ENCODE measurements at regions of chr1 and their contacts with region 1.

Region 1: DNA sequence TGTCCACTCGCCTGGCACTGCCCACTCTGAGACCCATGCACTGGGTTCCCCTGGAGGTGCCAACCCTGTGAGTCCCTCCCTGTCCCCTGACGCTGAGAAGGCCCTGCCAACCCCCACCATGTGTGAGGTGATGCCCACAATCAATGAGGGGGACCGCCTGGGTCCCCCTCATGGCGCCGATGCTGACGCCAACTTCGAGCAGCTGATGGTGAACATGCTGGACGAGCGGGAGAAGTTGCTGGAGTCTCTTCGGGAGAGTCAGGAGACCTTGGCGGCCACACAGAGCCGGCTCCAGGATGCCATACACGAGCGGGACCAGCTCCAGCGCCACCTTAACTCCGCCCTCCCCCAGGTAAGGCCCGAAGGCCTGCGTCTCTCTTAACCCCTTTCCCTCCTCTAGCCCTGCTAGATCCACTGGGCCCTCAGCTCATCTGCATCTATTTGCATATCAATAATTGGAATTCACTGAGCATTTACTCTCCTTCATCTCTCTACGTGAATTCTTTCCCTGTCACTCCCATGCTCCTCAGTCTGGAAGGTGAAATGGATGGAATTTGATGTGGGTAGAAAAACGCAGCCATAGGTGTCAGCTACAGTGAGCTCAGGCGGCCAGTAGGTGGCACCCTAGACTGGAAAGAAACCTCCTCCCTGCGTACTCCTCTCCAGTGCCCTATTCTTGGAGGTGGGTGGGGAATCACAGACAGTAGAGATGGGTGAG is 12.8 kb downstream of the PPFIA4 start:
- DNase-seq: peak; percentile 85
- H3K4me3 ChIP-seq: no peak overlapping the region
- H3K27ac ChIP-seq: peak overlapping the region; percentile 63 to 88 (median 76)
- H3K4me1 ChIP-seq: peaks cover 0 to 34% (median 25%) of the 10 kb centered on the region in 4 donors
- H3K27me3 ChIP-seq: no peaks in the 10 kb centered on the region
- CTCF ChIP-seq: peak; percentile 82 to 92 (median 87)
- EP300 ChIP-seq: no peak
- POLR2A ChIP-seq: no peak

Region 2: DNA sequence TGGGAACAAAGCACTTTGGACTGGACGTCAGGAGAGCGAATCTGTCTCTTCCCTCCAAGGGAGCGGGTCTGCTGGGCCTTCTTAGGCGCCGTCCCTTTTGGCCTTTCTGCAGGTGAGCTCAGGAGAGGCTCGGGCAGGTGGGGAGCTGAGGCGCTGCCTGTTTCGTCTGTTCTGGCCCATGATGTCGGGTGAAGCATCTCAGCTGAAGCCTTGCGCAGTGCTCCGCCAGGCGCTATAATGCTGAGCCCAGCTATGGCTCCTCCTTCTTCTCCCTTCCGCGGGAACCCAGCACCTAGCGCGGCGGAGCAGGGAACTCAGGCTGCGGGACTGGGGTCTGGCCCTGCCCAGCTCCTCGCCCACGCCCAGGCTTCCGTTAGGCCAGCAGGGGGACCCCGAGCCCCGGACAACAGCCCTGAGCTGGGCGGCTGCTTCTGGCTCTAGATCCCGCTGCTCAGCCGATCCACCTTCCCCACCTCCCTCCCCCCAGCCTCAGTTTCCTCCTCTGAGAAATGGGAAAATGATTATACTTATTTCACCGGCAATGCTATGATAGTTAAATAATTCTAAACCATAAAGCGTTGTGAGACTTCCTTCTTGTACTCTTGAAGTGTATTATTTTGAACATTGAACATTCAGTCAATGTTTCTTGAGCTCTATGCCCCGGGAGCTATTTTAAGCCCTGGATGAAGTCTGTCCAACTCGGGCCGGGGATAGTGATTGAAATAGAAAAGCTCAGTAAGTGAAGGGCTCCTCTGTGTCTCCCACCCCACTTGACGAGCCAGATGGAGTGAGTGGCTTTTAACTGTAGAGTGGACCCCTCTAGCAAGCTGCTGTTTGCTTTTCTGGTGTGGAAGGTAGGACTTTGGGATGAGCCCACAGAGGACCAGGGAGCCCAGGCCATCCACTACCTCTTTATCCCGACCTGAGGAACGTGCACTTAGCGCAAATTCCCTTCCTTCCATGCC is 78.8 kb after region 1 on chr1:
- intact Hi-C with region 1: loop called (anchors 2 kb)
- DNase-seq: peak; percentile 80
- H3K4me3 ChIP-seq: no peak overlapping the region
- H3K27ac ChIP-seq: no peak overlapping the region
- H3K4me1 ChIP-seq: peaks cover 0 to 7% (median 4%) of the 10 kb centered on the region in 4 donors
- H3K27me3 ChIP-seq: peaks cover 0 to 47% (median 21%) of the 10 kb centered on the region in 3 donors
- CTCF ChIP-seq: peak in 3 of 4 experiments; percentile 50 to 77 (median 56)
- EP300 ChIP-seq: no peak
- POLR2A ChIP-seq: no peak

Region 3: DNA sequence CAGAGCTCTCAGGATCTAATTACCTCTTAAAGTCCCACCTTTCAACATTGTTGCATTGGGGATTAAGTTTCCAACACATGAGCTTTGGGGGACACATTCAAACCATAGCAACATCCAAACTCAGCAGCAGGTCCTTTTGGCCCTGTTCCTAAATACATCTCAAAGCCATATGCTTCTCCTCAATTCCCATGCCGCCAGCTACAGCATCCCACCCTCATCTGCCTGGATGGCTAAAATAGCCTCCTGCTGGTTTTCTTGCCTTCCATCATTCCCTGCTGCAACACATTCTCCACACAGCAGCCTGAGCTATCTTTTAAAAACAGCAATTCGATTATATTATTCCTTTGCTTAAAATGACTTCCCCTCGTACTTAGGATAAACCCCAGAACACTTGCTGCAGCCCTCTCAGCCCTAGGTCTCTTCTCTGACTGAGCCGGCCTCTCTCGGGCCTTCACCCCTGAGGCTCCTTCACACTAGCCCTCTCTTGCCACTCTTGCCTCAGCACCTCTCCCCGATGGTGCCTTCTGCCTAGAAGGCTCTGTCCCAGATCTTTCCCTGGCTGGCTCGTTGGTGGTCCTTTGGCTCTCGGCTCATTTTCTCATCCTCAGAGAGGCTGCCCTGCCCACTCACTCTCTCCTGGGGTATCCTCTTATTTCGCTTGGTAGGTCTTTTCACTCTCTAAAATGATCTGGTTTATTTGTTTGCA is 120.1 kb after region 1 on chr1:
- intact Hi-C with region 1: no loop called
- DNase-seq: no peak
- H3K4me3 ChIP-seq: no peak overlapping the region
- H3K27ac ChIP-seq: no peak overlapping the region
- H3K4me1 ChIP-seq: no peaks in the 10 kb centered on the region
- H3K27me3 ChIP-seq: no peaks in the 10 kb centered on the region
- CTCF ChIP-seq: no peak
- EP300 ChIP-seq: no peak
- POLR2A ChIP-seq: no peak

Region 4: GRCh38 chr1:203172128-203173010 is 133.3 kb after region 1 on chr1:
- intact Hi-C with region 1: loop called (anchors 1 kb)
- DNase-seq: peak; percentile 79
- H3K4me3 ChIP-seq: no peak overlapping the region
- H3K27ac ChIP-seq: no peak overlapping the region
- H3K4me1 ChIP-seq: no peaks in the 10 kb centered on the region
- H3K27me3 ChIP-seq: peaks cover 0 to 3% (median 0%) of the 10 kb centered on the region in 3 donors
- CTCF ChIP-seq: peak; percentile 42 to 84 (median 70)
- EP300 ChIP-seq: no peak
- POLR2A ChIP-seq: no peak

Region 5: DNA sequence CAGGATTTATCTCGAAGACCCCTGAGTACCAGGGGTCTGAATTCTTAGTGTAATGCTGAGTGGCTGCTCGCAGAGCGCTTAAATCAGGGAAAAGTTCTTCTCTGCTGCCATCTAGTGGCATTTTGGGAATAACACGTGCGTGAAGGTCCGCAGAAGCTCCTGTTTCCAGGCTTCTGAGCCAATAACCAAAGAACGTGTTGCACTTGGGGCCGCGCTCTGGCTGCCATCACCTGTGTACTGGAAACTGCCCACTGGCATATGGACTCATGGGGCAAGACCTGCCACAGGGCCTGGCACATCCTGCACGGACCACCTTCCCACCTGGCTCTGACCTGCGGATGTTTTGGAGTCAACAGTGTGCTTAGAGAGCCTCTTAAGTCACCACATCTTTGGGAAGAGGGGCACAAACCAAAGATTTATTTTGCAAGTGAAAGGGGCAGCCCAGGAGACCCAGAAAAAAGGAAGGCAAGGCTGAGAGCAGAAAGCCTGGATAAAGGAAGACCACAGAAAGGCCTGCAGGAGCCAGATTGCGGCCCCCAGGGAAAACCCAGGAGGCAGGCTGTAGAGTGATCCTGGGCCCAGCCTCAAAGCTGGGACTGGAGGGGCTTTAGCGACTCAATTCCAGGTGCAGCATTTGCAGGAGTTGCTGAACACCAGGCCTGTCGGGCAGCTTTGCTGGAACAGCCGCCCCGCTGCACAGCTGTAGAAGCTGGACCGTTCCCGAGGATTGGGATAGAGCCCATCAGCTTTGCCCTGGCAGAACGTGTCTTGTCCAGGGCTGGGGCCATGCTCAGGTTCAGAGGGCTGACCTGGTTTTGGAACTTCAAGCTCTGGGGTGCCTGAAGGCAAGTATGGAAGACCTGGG is 177.5 kb after region 1 on chr1:
- intact Hi-C with region 1: loop called (anchors 1 kb)
- DNase-seq: no peak
- H3K4me3 ChIP-seq: no peak overlapping the region
- H3K27ac ChIP-seq: no peak overlapping the region
- H3K4me1 ChIP-seq: peaks cover 0 to 4% (median 2%) of the 10 kb centered on the region in 4 donors
- H3K27me3 ChIP-seq: peaks cover 0 to 11% (median 0%) of the 10 kb centered on the region in 3 donors
- CTCF ChIP-seq: peak; percentile 23 to 77 (median 62)
- EP300 ChIP-seq: no peak
- POLR2A ChIP-seq: no peak